MCF 10A (cell line): ENCODE measurements at regions of chr18 and their contacts with region 1.

Region 1: DNA sequence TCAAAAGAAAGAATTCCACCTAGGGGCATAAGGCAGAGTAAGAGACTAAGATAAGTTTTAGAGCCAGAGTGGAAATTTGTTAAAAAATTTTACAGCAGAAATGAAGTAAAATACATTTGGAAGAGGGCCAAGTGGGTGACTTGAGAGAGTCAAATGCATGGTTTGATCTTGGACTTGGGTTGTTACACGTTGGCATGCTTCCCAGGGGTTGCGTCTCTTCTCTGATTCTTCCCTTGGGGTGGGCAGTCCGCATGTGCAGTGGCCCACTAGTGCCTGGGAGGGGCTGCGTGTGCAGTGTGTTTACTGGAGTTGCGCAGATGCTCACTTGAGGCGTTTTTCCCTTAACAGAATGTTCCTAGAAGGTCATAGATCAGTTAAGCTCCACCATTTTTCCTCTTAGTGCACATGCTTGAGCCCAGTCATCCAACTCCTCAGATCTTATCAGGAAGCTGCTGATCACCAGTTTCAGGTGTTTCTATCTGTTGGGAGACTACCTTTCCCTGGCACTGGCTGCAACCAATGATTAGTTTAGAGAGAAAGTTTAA is 13.1 kb downstream of the SEH1L start:
- DNase-seq: no peak
- H3K4me3 Mint-ChIP-seq: no peak overlapping the region
- H3K27ac Mint-ChIP-seq: peak overlapping the region; percentile 51
- H3K4me1 Mint-ChIP-seq: no peaks in the 10 kb centered on the region
- H3K27me3 Mint-ChIP-seq: no peaks in the 10 kb centered on the region
- CTCF ChIP-seq: no peak

Region 2: DNA sequence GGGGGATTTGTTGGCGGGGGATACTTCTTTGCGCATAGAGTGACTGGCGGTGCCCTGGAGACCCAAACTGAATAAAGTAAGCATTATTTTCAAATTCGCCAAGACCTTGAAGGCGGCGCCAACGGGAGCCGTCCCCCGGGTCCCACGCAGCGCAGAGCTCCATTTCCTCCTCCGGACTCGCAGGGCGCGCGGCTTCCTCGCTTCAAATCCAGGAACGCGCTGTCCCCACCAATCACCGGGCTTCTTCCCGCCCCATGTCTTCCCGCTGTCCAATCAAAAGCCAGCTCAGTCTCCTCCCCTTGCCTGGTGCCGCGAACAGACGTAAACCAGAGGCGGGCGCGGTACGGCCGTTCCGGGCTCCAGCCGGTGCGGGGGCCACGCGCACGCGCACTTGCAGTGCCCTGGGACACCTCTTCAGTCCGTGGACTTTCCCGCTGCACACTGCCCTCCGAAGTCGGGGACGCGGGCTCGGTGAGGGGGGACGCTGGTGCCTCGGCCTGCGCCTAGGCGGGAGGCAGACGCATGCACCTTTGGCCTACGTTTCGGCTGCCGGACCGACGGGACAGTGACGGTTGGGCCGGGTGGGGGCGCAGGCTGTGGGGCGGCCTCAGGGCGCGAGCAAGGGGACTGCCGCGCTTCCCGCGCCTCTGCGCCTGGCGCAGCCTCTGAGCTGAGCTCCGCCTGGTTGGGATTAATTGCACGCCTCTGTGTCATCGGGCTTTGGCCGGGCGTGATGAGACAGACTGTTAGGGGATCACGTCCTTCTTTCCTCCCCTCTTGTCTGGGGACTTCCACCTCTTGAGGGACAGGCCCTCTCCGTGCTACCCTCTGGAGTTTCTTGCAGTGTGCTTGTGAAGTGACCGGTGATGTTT is 30.3 kb after region 1 on chr18 and contains the start of gene CEP192:
- CTCF ChIA-PET with region 1: no interaction called
- POLR2A ChIA-PET with region 1: interaction called, 10 read pairs
- intact Hi-C with region 1: no loop called
- DNase-seq: peak; percentile 98
- H3K4me3 Mint-ChIP-seq: peak within 1 kb of the TSS; percentile 99
- H3K27ac Mint-ChIP-seq: peak within 1 kb of the TSS; percentile 83
- H3K4me1 Mint-ChIP-seq: peaks cover 21% of the 10 kb centered on the region
- H3K27me3 Mint-ChIP-seq: no peaks in the 10 kb centered on the region
- CTCF ChIP-seq: no peak
- total RNA-seq, gene CEP192: 14.3 and 15.2 TPM in 2 replicates

Region 3: GRCh38 chr18:13026583-13027270 is 65.8 kb after region 1 on chr18:
- CTCF ChIA-PET with region 1: no interaction called
- POLR2A ChIA-PET with region 1: no interaction called
- intact Hi-C with region 1: no loop called
- DNase-seq: no peak
- H3K4me3 Mint-ChIP-seq: no peak overlapping the region
- H3K27ac Mint-ChIP-seq: no peak overlapping the region
- H3K4me1 Mint-ChIP-seq: no peaks in the 10 kb centered on the region
- H3K27me3 Mint-ChIP-seq: no peaks in the 10 kb centered on the region
- CTCF ChIP-seq: no peak